ENCODE measurements at regions of chr5 and their contacts with region 1.

Region 1: GRCh38 chr5:34929150-34929719 is at the start of gene DNAJC21:
- DNase-seq: peak; percentile 99
- ATAC-seq: peak; percentile 89
- H3K4me3 ChIP-seq: peak within 1 kb of the TSS; percentile 60 to 88 (median 73)
- H3K4me3 Mint-ChIP-seq: peak within 1 kb of the TSS; percentile 96
- H3K27ac ChIP-seq: peak within 1 kb of the TSS; percentile 67 to 94
- H3K27ac Mint-ChIP-seq: peak within 1 kb of the TSS; percentile 94
- H3K4me1 ChIP-seq: peaks cover 15 to 20% of the 10 kb centered on the region in 2 donors
- H3K4me1 Mint-ChIP-seq: peaks cover 26% of the 10 kb centered on the region
- H3K27me3 ChIP-seq: no peaks in the 10 kb centered on the region
- H3K27me3 Mint-ChIP-seq: no peaks in the 10 kb centered on the region
- CTCF ChIP-seq: no peak
- total RNA-seq, gene DNAJC21: 58.3 and 59.3 TPM in 2 replicates

Region 2: GRCh38 chr5:34608859-34609648 is 320.2 kb before region 1 on chr5:
- CTCF ChIA-PET with region 1: no interaction called
- POLR2A ChIA-PET with region 1: no interaction called
- intact Hi-C with region 1: no loop called
- DNase-seq: no peak
- ATAC-seq: no peak
- H3K4me3 ChIP-seq: no peak overlapping the region
- H3K4me3 Mint-ChIP-seq: no peak overlapping the region
- H3K27ac ChIP-seq: no peak overlapping the region
- H3K27ac Mint-ChIP-seq: no peak overlapping the region
- H3K4me1 ChIP-seq: no peaks in the 10 kb centered on the region
- H3K4me1 Mint-ChIP-seq: peaks cover 9% of the 10 kb centered on the region
- H3K27me3 ChIP-seq: no peaks in the 10 kb centered on the region
- H3K27me3 Mint-ChIP-seq: peaks cover 3% of the 10 kb centered on the region
- CTCF ChIP-seq: no peak

Region 3: DNA sequence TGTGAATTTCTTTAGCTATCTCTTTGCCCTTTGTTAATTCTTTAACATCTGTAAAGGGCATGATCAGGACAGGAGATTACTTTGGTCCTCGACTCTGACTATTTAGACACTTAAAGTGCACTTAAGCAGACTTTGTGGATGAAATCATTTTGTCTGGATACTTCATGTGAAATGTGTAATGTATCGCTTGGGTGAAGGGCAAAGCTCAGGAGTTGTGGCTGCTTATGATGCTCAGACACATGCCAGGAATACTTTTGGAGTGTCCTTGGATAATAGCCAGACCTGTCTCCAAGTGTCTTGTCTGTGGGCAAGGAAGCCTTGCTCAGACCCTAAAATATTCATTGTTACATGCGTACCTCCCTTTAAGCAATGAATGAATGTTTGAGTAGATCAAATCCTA is 185.4 kb before region 1 on chr5:
- CTCF ChIA-PET with region 1: no interaction called
- POLR2A ChIA-PET with region 1: no interaction called
- intact Hi-C with region 1: loop called (anchors 1 kb)
- DNase-seq: no peak
- ATAC-seq: no peak
- H3K4me3 ChIP-seq: no peak overlapping the region
- H3K4me3 Mint-ChIP-seq: no peak overlapping the region
- H3K27ac ChIP-seq: peak overlapping the region in 1 of 2 donors; percentile 78
- H3K27ac Mint-ChIP-seq: no peak overlapping the region
- H3K4me1 ChIP-seq: peaks cover 19 to 26% of the 10 kb centered on the region in 2 donors
- H3K4me1 Mint-ChIP-seq: peaks cover 47% of the 10 kb centered on the region
- H3K27me3 ChIP-seq: no peaks in the 10 kb centered on the region
- H3K27me3 Mint-ChIP-seq: no peaks in the 10 kb centered on the region
- CTCF ChIP-seq: no peak

Region 4: GRCh38 chr5:34817563-34818351 is 111.5 kb before region 1 on chr5:
- CTCF ChIA-PET with region 1: no interaction called
- POLR2A ChIA-PET with region 1: no interaction called
- intact Hi-C with region 1: no loop called
- DNase-seq: no peak
- ATAC-seq: no peak
- H3K4me3 ChIP-seq: no peak overlapping the region
- H3K4me3 Mint-ChIP-seq: no peak overlapping the region
- H3K27ac ChIP-seq: no peak overlapping the region
- H3K27ac Mint-ChIP-seq: no peak overlapping the region
- H3K4me1 ChIP-seq: no peaks in the 10 kb centered on the region
- H3K4me1 Mint-ChIP-seq: no peaks in the 10 kb centered on the region
- H3K27me3 ChIP-seq: no peaks in the 10 kb centered on the region
- H3K27me3 Mint-ChIP-seq: peaks cover 3% of the 10 kb centered on the region
- CTCF ChIP-seq: no peak

Region 5: GRCh38 chr5:34915139-34915855 is 13.9 kb before region 1 on chr5 and contains the starts of genes BRIX1 and RAD1:
- CTCF ChIA-PET with region 1: interaction called, 24 read pairs
- POLR2A ChIA-PET with region 1: interaction called, 54 read pairs
- intact Hi-C with region 1: loop called (anchors 1 kb)
- DNase-seq: peak; percentile 97
- ATAC-seq: peak; percentile 99
- H3K4me3 ChIP-seq: peak within 1 kb of the TSS; percentile 82 to 99 (median 87)
- H3K4me3 Mint-ChIP-seq: no peak within 1 kb of the TSS
- H3K27ac ChIP-seq: peak within 1 kb of the TSS; percentile 57 to 80
- H3K27ac Mint-ChIP-seq: peak within 1 kb of the TSS; percentile 63
- H3K4me1 ChIP-seq: peaks cover 23 to 26% of the 10 kb centered on the region in 2 donors
- H3K4me1 Mint-ChIP-seq: peaks cover 32% of the 10 kb centered on the region
- H3K27me3 ChIP-seq: no peaks in the 10 kb centered on the region
- H3K27me3 Mint-ChIP-seq: no peaks in the 10 kb centered on the region
- CTCF ChIP-seq: no peak
- total RNA-seq, gene BRIX1: 26.4 and 29.3 TPM in 2 replicates
- total RNA-seq, gene RAD1: 25.9 and 26.1 TPM in 2 replicates

Region 6: GRCh38 chr5:35129918-35130485 is 200.8 kb after region 1 on chr5:
- CTCF ChIA-PET with region 1: no interaction called
- POLR2A ChIA-PET with region 1: no interaction called
- intact Hi-C with region 1: no loop called
- DNase-seq: no peak
- ATAC-seq: no peak
- H3K4me3 ChIP-seq: no peak overlapping the region
- H3K4me3 Mint-ChIP-seq: no peak overlapping the region
- H3K27ac ChIP-seq: no peak overlapping the region
- H3K27ac Mint-ChIP-seq: no peak overlapping the region
- H3K4me1 ChIP-seq: no peaks in the 10 kb centered on the region
- H3K4me1 Mint-ChIP-seq: no peaks in the 10 kb centered on the region
- H3K27me3 ChIP-seq: no peaks in the 10 kb centered on the region
- H3K27me3 Mint-ChIP-seq: peaks cover 26% of the 10 kb centered on the region
- CTCF ChIP-seq: no peak

Region 7: GRCh38 chr5:35785601-35786085 is 856.4 kb after region 1 on chr5:
- CTCF ChIA-PET with region 1: no interaction called
- POLR2A ChIA-PET with region 1: no interaction called
- intact Hi-C with region 1: no loop called
- DNase-seq: no peak
- ATAC-seq: no peak
- H3K4me3 ChIP-seq: no peak overlapping the region
- H3K4me3 Mint-ChIP-seq: no peak overlapping the region
- H3K27ac ChIP-seq: no peak overlapping the region
- H3K27ac Mint-ChIP-seq: no peak overlapping the region
- H3K4me1 ChIP-seq: no peaks in the 10 kb centered on the region
- H3K4me1 Mint-ChIP-seq: no peaks in the 10 kb centered on the region
- H3K27me3 ChIP-seq: no peaks in the 10 kb centered on the region
- H3K27me3 Mint-ChIP-seq: no peaks in the 10 kb centered on the region
- CTCF ChIP-seq: no peak